ENCODE measurements at regions of chr4 and their contacts with region 1.

Region 1: DNA sequence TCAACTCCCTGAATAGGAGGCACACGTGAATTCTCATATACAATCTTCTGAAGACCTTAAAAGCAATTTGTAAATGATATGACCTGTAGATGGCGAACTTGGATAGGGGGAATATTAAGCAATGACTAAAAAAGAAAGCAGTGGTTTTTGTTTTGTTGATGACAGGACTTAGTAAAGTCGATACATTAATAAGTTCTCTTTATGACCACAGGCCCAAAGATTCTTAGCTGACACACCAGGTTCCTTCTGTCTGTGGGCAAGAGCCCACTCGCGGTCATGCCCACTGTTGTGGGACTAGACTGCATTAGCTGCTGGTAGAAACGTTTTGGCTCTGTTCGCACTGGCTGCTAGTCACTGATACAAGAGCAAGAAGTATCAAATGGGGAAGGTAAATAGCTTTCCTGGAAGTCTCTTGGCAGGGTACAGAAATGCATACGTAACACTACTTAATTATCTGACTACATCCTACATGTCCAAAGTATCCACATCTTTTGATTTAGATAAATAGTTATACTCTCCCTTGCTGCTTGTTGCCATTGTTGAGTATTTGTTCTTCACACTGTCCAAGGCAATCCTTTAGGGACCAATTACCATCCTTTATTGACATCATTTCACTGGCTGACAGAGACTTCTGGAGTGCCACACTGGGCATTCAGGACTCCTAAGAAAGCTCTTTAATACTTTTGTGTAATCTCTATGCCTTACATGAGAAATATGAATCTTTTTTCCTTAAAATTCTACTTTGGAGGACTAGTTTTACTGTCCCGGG is 31.0 kb downstream of the ALPK1 start:
- DNase-seq: no peak

Region 2: DNA sequence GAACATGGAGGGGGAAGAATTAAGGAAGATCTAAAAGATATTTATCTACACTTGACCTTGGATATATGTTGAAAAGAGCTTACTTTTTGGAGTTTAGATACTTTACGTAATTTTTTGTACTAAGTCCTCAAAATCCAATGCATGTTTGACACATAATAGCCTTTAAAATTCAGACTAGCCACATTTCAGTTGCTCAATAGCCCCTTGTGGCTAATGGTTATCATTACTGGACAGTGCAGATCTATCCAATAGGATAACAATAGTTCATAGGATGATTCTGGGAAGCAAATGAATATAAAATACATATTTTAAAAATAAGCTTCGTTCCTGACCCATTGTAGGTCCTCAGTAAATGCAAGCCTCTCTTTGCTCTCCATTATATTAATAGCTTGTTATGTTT is 82.8 kb before region 1 on chr4:
- intact Hi-C with region 1: no loop called
- DNase-seq: no peak

Region 3: DNA sequence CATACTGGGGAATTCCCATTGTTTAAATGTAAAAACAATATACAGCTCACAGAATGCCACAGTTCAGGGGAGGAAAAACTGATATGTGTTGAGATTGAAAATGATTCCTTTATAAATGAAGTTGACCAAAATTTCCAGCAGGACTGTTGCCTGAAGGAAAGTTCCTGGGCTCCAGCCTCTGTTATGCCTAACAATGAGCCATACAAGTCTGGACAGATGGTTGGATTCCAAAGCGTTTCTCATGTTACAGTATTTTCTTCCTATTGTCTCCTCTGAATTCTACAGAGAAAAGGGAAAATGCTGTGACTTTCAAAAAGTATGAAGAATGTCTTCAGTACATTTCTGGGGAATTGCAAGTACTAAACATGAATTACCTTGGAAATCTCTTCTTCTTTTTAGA is 42.3 kb after region 1 on chr4:
- intact Hi-C with region 1: no loop called
- DNase-seq: no peak

Region 4: DNA sequence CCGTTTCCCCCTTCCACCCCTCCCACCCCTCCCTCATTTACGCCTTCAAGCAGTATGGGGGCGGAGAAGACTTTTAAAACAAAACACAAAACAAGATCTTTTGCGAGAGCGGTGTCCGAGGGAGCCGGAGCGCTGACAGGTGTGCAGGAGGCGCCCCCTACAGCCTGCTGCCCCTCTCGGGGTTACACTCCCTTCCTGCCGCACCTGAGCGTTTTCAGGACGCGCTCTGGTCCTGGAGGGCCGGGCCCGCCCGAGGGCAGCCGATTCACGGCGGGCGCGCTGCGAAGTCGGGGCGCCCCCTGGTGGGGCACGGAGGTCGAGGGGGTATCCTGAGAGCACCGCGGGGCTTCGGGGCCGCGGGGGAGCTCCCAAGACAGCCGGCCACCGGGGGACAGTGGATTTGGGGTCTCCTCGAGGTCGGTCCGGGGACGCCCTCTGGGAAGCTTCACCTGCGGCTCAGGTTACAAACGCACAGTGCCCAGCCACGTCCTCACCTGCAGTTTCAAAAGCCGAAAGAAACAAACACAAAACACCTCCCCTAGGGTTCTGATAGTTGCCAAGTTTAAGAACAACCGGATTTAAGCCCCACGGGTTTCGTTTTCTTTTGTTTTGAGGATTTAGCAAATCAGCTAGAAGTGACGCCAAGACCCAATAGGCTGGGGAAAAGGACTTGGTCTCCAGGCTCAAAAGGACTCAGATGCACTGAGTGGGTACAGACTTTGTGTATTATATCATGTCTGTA is 195.8 kb after region 1 on chr4:
- intact Hi-C with region 1: loop called (anchors 5 kb)
- DNase-seq: peak; percentile 81

Region 5: DNA sequence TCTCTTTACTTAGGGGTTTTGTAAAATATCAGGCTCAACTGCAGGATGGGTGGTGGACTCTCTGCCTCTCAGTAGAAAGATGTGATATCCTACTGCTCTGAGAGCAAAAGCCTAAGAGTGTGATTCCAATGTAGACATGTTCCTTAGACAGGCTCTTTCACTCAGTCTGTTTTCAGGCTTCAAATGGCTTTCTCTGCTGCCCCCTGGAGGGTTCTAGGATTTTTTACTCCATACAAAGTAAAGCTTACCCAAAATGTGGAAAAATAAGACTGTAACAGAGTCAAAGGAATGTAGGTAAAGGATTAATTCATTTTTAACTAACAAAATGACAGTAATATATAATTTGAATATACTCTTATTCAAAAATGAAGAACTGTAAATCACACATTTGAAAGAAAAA is 276.4 kb after region 1 on chr4:
- intact Hi-C with region 1: loop called (anchors 2 kb)
- DNase-seq: no peak

Region 6: GRCh38 chr4:112633477-112634235 is 305.5 kb after region 1 on chr4:
- intact Hi-C with region 1: no loop called
- DNase-seq: no peak

Measured in cardiac septum (tissue), 1 donor.